ENCODE measurements at regions of chr14 and their contacts with region 1.

Region 1: GRCh38 chr14:70972107-70972976 is 65.1 kb downstream of the PCNX1 start:
- DNase-seq: peak; percentile 84
- ATAC-seq: peak; percentile 88 to 91

Region 2: DNA sequence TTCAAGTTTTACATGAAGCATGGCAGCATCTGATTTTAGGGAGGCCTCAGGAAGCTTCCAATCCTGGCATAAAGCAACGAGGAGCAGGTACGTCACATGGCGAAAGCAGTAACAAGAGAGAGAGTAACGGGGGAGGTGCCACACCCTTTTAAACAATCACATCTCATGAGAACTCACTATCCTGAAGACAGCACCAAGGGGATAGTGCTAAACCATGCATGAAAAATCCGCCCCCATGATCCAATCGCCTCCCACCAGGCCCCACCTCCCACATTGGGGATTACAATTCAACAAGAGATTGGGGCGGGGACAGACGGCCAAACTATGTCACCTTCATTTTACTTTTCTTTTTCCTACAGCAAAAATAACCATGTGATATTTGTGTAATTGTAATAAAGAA is 155.8 kb before region 1 on chr14:
- intact Hi-C with region 1: loop called in 1 of 2 experiments (anchors 2 kb)
- DNase-seq: no peak
- ATAC-seq: no peak

Region 3: GRCh38 chr14:71103662-71104484 is 131.5 kb after region 1 on chr14:
- intact Hi-C with region 1: no loop called
- DNase-seq: no peak
- ATAC-seq: peak in 1 of 2 donors; percentile 54

Measured in left cardiac atrium (tissue), 4 donors.